ENCODE measurements at regions of chr14 and their contacts with region 1.

Region 1: DNA sequence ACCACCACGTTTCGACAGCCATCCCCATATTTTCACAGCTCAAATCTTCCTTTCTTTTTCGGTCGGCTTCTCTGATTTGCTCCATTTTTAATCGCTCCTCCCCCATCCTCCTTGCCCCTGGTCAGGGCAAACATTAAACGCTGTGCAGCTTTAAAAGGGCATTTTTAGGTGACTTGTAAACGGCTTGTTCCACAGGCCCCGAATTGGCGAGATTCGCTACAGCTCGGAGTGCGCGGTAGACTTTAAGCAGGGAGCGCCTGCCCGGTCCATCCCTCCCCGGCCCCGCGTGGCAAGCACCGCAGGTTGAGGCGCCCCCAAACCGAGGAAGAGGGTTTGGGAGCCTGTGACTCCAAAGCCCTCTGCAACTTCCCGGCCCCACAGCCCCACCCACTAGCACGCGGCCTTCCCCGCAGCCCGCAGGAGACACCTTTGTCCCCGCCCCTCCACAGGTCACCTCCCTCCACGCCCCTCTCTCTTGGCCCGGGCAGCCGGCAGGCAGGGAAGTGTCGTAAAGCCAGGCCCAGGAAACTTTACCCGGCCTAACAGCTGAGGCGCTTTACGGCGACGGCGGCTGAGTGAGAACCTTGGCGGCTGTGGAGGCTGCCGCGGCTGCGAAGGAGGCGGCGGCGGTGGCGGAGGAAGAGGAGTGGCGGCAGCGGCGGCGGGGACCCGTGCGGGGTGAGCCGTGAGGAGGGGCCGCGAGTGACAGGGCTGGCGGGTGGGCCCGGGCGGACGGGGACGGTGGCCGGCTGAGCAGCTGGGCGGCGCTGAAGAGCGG is at the start of gene NAA30:
- DNase-seq: peak; percentile 96
- H3K4me3 Mint-ChIP-seq: peak within 1 kb of the TSS; percentile 93
- H3K27ac Mint-ChIP-seq: peak within 1 kb of the TSS; percentile 84
- H3K4me1 Mint-ChIP-seq: peaks cover 7% of the 10 kb centered on the region
- H3K27me3 Mint-ChIP-seq: no peaks in the 10 kb centered on the region
- CTCF ChIP-seq: no peak
- total RNA-seq, gene NAA30: 21.1 and 25.3 TPM in 2 replicates

Region 2: GRCh38 chr14:57066887-57067513 is 323.2 kb before region 1 on chr14:
- CTCF ChIA-PET with region 1: no interaction called
- POLR2A ChIA-PET with region 1: no interaction called
- intact Hi-C with region 1: no loop called
- DNase-seq: peak; percentile 8
- H3K4me3 Mint-ChIP-seq: no peak overlapping the region
- H3K27ac Mint-ChIP-seq: no peak overlapping the region
- H3K4me1 Mint-ChIP-seq: no peaks in the 10 kb centered on the region
- H3K27me3 Mint-ChIP-seq: peaks cover 85% of the 10 kb centered on the region
- CTCF ChIP-seq: no peak

Region 3: GRCh38 chr14:57268161-57269069 is 121.8 kb before region 1 on chr14 and contains the starts of genes AP5M1 and EXOC5:
- CTCF ChIA-PET with region 1: interaction called, 3 read pairs
- POLR2A ChIA-PET with region 1: interaction called, 44 read pairs
- intact Hi-C with region 1: no loop called
- DNase-seq: peak; percentile 93
- H3K4me3 Mint-ChIP-seq: peak within 1 kb of the TSS; percentile 98
- H3K27ac Mint-ChIP-seq: peak within 1 kb of the TSS; percentile 96
- H3K4me1 Mint-ChIP-seq: peaks cover 32% of the 10 kb centered on the region
- H3K27me3 Mint-ChIP-seq: no peaks in the 10 kb centered on the region
- CTCF ChIP-seq: no peak
- total RNA-seq, gene AP5M1: 31.7 and 32.6 TPM in 2 replicates
- total RNA-seq, gene EXOC5: 58.8 and 61.5 TPM in 2 replicates

Region 4: GRCh38 chr14:57352396-57353170 is 37.6 kb before region 1 on chr14:
- CTCF ChIA-PET with region 1: no interaction called
- POLR2A ChIA-PET with region 1: interaction called, 11 read pairs
- intact Hi-C with region 1: no loop called
- DNase-seq: peak; percentile 11
- H3K4me3 Mint-ChIP-seq: peak overlapping the region; percentile 13
- H3K27ac Mint-ChIP-seq: peak overlapping the region; percentile 24
- H3K4me1 Mint-ChIP-seq: peaks cover 18% of the 10 kb centered on the region
- H3K27me3 Mint-ChIP-seq: no peaks in the 10 kb centered on the region
- CTCF ChIP-seq: no peak

Region 5: DNA sequence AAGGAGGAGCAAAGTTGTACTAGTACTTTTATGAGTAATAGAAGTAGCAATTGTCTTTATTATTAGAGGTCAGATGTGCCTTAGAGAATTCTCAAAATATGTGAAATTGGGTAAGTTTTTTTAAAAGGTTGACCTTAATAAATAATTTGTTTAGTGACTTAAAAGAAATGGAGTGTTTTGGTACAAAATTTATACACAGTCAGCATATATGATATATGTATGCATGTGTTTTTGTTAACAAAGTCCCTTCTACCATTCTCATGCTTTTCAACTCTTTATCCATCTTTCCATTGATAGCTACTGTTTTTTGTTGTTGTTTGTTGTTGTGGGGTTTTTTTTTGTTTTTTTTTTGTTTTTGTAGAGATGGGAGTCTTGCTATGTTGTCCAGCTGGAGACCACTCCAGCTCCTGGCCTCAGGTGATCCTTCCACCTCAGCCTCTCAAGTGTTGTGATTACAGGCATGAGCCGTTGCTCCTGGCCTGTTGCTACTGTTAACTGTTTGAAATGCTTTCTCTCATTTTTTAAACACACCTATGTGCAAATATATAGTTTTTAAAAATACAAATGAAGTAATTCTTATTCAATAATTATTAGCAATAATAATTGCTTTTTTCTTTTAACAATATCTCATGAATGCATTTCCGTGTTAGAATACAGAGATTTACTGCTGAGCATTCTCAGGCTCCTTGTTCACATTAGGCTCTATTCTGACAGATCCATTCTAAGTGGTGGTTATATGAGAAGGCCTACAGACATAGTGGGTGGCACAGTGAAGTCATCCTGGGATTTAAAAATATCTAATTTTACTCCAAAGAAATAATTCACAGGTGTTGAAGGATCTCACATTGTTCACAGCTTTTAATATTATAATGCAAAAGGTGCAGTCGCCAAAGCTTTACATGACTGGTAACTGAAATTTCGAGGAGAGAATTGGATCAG is 10.6 kb after region 1 on chr14:
- CTCF ChIA-PET with region 1: interaction called, 6 read pairs
- POLR2A ChIA-PET with region 1: interaction called, 24 read pairs
- intact Hi-C with region 1: no loop called
- DNase-seq: no peak
- H3K4me3 Mint-ChIP-seq: no peak overlapping the region
- H3K27ac Mint-ChIP-seq: peak overlapping the region; percentile 3
- H3K4me1 Mint-ChIP-seq: peaks cover 6% of the 10 kb centered on the region
- H3K27me3 Mint-ChIP-seq: no peaks in the 10 kb centered on the region
- CTCF ChIP-seq: no peak

Measured in MCF 10A (cell line).